Posterior vena cava (tissue), 2 donors: ENCODE measurements at regions of chr1 and their contacts with region 1.

Region 1: GRCh38 chr1:229227298-229227919 is 43.5 kb upstream of the RAB4A start:
- DNase-seq: peak; percentile 94

Region 2: DNA sequence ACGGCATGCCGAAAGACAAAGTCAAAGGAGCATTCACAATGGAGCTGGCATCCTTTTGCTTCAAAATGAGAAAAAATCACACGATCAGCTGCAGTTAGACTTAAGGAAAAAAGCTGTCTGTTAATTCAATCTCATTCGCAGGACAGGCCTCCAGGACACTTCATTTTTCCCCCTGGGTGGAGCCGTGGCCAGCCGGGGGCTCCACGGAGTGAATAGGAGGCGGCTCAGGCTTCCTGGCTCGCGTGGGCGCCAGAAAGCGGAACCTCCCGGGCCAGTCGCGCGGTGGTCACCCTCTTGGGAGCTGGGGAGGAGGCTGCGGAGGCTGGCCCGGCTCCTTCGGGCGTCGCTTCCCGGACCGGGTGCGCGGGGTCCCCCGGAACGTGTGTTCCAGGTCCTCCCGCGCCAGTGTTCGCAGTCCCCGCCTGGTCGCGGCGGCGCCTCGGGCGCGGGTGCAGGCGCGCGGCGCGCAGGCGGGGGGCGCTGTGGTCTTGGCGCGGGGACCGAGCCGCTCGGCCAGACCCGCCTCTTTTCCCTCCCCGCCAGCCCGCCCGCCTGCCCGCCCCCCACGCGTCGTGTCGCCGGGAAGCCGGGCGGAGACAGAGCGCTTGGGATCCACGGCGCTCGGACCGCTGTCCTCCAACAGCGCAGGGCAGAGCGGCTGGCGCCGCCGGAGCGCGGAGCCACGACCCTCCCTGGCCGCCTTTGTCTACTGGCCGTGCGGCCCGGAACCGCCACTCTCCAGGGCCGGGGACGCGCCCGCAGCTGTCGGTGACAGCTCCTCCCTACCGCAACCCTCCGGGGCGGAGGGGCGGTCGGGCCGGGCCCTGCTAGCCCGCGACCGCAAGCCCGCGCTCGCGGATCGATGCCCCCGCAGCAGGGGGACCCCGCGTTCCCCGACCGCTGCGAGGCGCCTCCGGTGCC is 492.3 kb before region 1 on chr1 and contains the start of gene RHOU:
- intact Hi-C with region 1: loop called (anchors 2 to 10 kb)
- DNase-seq: peak; percentile 94
- total RNA-seq, gene RHOU: 15.7 to 24.6 TPM

Region 3: GRCh38 chr1:229192031-229192430 is 35.4 kb before region 1 on chr1:
- intact Hi-C with region 1: no loop called
- DNase-seq: no peak

Region 4: DNA sequence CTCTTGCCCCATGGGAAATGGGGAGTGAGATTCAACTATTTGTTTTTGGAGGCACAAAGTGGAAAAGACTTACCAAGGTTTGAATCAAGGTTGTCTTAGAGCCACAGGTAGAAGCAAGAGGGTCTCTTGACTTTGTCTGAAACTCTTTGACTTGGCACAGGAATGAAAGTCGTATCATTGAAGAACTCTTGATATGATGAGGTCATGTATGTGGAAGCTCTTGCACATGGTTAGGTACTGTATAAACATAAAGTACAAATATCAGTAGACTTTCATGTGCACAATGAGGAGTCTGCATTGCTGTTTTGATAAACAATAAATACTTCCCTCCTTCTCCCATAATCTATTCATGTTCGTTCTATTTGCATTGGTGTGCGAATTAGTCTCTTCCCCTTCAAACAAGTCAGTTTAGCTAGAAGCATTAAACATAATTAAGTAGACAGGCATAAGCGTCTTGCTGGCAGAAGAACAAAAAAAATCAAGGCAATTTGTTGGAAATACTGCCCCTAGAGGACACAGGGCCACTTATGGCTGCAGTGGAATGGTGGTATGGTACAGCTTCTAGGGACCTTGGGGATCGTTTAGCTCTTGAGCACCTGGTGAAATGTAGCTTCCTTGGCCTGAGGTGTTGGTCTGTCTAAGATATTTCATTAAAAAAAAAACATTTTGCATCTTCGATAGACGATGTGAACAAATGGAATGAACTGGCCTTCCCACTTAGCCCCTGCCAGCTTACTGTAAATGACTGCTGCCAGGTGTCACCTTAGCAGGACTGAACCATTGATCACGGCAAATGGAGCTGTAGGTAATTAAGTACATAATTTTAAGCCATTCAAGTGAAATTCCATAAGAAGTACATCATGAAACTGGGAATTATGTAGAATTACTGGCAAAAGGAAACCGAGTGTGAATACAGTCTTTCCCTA is 621.6 kb after region 1 on chr1:
- intact Hi-C with region 1: no loop called
- DNase-seq: no peak